ENCODE measurements at regions of chr20 and their contacts with region 1.

Region 1: GRCh38 chr20:5078399-5078958 is 41.3 kb downstream of the PCNA start:
- DNase-seq: peak; percentile 81
- H3K4me3 Mint-ChIP-seq: peak overlapping the region; percentile 63
- H3K27ac Mint-ChIP-seq: peak overlapping the region; percentile 89
- H3K4me1 Mint-ChIP-seq: peaks cover 56% of the 10 kb centered on the region
- H3K27me3 Mint-ChIP-seq: no peaks in the 10 kb centered on the region

Region 2: DNA sequence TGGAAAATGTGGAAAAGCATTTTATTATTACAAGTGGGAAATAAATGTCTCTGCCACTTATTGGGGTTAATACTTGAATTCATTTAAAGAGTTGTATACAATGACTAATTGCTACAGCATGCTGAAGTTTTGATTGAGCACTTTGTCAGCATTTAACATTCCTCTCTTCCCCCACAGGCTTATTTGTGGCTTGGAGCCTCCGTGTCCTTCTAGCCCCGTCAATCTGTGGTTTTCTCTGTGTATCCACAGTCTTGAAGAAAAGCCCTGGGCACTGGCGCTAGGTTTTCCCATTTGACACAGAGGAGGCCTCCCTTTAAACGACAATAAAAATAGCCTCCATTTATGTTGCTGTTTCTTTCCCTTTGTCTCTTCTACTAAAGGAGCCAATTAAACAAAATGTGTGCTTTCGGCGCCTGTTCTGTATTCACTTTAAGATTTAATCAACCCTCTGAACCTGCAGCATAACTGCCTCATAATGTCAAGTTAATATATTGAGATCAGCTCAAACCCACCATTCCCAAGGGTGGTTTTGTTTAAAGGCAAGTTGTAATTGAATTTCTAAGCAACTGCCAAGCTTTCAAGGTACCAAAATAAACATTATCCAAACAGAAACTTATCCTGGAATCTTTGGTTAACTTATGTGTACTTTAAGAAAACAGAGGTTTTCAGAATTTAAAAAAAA is 736.5 kb before region 1 on chr20:
- intact Hi-C with region 1: no loop called
- DNase-seq: no peak
- H3K4me3 Mint-ChIP-seq: no peak overlapping the region
- H3K27ac Mint-ChIP-seq: no peak overlapping the region
- H3K4me1 Mint-ChIP-seq: no peaks in the 10 kb centered on the region
- H3K27me3 Mint-ChIP-seq: peaks cover 47% of the 10 kb centered on the region

Region 3: DNA sequence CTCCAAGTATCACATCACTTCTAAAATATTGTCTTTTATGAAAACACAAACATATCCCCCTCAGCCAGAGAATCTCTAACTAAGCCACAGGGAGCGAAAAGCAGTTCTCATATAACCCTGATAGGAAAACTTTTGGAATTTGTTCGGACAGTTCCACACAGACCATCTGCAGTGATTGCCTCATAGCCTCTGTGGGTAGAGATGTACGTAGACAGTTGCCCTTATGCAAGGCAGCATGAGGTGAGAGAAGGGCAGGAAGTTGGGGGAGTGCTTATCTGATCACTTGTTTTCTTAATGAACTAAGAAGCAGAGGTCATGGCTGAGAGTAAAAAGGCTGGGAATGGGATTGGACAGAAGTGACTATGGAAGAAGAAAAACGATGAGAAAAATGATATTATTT is 116.7 kb before region 1 on chr20:
- intact Hi-C with region 1: loop called (anchors 2 kb)
- DNase-seq: peak; percentile 14
- H3K4me3 Mint-ChIP-seq: peak overlapping the region; percentile 67
- H3K27ac Mint-ChIP-seq: peak overlapping the region; percentile 94
- H3K4me1 Mint-ChIP-seq: peaks cover 29% of the 10 kb centered on the region
- H3K27me3 Mint-ChIP-seq: no peaks in the 10 kb centered on the region

Region 4: DNA sequence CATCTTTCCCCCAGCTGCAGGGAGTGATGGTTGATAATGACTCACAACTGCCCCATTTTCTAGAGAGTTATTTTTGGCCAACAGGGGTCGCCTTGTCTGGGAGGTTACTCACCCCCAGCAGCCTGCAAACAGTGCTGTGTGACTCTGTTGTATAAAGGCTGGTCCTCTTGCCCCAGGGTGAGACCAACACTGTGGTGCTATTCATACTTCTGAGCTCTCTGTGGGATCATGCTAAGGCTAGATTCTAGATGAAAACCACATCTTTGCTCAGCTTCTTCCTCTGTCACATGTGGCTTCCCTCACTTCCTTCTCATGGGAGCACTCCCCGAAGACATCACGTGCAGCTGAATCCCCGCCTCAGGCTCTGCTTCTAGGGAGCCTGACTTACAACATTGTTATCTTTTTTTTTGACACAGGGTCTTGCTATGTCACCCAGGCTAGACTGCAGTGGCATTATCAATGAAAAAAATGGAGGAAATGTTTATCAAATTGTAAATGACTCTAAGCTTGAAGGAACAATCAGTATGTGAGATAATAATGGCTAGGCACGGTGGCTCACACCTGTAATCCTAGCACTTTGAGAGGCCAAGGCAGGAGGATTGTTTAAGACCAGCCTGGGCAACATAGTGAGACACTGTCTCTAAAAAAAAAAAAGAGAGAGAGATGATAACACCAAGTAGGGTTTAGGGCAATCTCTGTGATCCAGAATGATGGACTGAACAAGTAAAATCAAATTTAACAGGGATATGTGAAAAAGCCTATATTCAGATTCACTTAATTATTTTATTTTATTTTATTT is 21.5 kb before region 1 on chr20:
- intact Hi-C with region 1: loop called (anchors 1 kb)
- DNase-seq: peak; percentile 69
- H3K4me3 Mint-ChIP-seq: peak overlapping the region; percentile 47
- H3K27ac Mint-ChIP-seq: peak overlapping the region; percentile 87
- H3K4me1 Mint-ChIP-seq: peaks cover 25% of the 10 kb centered on the region
- H3K27me3 Mint-ChIP-seq: peaks cover 3% of the 10 kb centered on the region

Measured in activated T-helper 1 cell treated with anti-CD3 and anti-CD28 coated beads, Interleukin-12 subunit alpha, Interleukin-12 subunit beta, Interleukin-2, Interleukin-4 antibody, amounts not matched to agents 30 ng/mL and 10 ng/mL and 1 ng/mL, durations not matched to agents 14 hours and 24 hours and 36 hours (primary cell).